ENCODE measurements at regions of chr2 and their contacts with region 1.

Region 1: DNA sequence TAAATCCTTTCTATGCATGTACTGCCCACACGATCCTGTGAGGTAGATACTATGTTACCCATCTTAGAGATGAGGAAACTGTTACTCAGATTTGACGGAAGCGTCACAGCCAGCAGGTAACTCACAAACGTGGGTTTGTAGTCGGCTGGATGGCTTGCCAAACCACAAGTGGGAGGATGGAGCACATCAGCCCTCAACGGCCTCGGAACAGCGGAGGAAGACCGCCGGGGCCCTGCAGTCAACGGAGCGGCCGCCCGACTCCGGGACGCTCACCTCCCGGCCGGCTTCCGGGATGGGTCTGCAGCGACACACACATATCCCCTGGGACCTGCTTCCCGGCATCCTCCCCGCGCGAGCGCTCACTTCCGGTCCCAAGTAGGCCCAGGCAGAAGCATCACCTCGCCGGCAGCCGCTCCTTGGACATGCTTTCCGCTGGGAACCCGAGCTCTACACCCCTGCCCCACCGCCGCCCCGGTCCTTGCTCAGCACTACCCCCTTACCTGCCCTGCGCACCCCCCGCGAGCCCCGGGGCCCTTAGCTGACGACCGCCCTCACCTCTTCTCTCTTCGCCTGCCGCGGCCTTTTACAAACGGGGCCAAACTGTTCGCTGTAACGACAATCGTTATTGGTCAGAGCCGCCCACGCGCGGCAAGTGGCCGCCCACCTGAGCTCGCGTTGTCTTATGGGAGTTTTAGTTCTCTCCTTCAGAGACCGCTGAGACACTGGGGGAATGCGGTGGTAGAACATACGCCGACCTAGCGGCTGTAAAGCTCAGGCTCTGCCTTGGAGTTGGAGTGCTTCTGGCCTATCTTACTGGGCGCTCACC is at the start of gene C2orf42:
- DNase-seq: peak; percentile 98
- H3K4me3 Mint-ChIP-seq: peak within 1 kb of the TSS; percentile 97
- H3K27ac Mint-ChIP-seq: peak within 1 kb of the TSS; percentile 99
- H3K4me1 Mint-ChIP-seq: peaks cover 20% of the 10 kb centered on the region
- H3K27me3 Mint-ChIP-seq: peaks cover 1% of the 10 kb centered on the region
- total RNA-seq, gene C2orf42: 23.5 to 23.9 TPM

Region 2: GRCh38 chr2:69829256-69830046 is 361.2 kb before region 1 on chr2 and contains the start of gene GMCL1:
- CTCF ChIA-PET with region 1: no interaction called
- POLR2A ChIA-PET with region 1: no interaction called
- intact Hi-C with region 1: loop called (anchors 1 kb)
- DNase-seq: peak; percentile 99
- H3K4me3 Mint-ChIP-seq: peak within 1 kb of the TSS; percentile 81
- H3K27ac Mint-ChIP-seq: peak within 1 kb of the TSS; percentile 92
- H3K4me1 Mint-ChIP-seq: peaks cover 40% of the 10 kb centered on the region
- H3K27me3 Mint-ChIP-seq: no peaks in the 10 kb centered on the region
- total RNA-seq, gene GMCL1: 20.6 to 22.1 TPM

Region 3: DNA sequence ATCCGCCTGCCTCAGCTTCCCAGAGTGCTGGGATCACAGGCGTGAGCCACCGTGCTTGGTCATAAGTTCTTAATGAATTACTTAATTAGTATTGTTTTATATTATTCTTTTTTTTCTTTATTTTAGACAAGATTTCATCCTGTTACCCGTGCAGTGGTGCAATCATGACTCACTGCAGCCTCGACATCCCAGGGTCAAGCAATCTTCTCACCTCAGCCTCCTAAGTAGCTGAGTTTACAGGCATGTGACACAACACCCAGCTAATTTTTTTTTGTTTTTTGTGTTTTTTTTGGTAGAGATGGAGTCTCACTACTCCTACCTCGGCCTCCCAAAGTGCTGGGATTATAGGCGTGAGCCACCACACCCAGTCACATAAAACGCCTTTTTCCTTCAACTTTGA is 17.1 kb before region 1 on chr2:
- CTCF ChIA-PET with region 1: no interaction called
- POLR2A ChIA-PET with region 1: no interaction called
- intact Hi-C with region 1: no loop called
- DNase-seq: no peak
- H3K4me3 Mint-ChIP-seq: no peak overlapping the region
- H3K27ac Mint-ChIP-seq: no peak overlapping the region
- H3K4me1 Mint-ChIP-seq: no peaks in the 10 kb centered on the region
- H3K27me3 Mint-ChIP-seq: no peaks in the 10 kb centered on the region

Region 4: DNA sequence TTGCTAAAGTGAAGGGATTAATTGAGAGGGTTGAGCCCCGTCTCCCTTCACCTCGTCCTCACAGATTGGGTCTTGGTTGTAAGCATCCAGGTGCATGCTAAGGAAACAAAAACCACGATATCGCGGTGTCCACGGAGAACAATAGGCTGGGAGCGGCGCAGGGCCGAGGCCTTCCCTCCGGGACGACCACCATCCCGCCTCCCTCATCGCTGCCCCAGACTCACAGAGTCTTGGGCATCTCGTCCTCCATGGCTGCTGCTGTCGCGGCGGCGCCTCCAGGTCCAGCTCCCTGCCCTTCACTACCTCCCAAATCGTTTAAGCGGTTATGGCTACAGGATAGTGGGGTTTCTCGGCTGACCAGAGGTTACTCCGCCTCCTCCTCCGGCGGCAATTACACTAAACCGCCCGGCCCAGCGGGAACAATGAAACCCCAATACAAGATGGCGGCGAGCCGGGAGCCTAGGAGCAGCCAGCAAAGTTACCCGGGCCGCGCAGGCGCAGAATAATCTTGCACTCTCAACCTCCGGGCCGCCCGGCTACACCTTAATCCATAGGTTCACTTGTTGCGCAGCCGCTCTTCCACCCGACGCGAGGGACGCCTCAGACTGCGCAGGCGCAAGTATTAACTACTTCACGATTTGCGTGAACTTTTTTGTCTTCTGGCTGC is 57.7 kb after region 1 on chr2 and contains the start of gene TIA1:
- CTCF ChIA-PET with region 1: no interaction called
- POLR2A ChIA-PET with region 1: interaction called, 12 read pairs
- intact Hi-C with region 1: loop called (anchors 1 kb)
- DNase-seq: peak; percentile 99
- H3K4me3 Mint-ChIP-seq: peak within 1 kb of the TSS; percentile 90
- H3K27ac Mint-ChIP-seq: peak within 1 kb of the TSS; percentile 96
- H3K4me1 Mint-ChIP-seq: peaks cover 28% of the 10 kb centered on the region
- H3K27me3 Mint-ChIP-seq: peaks cover 4% of the 10 kb centered on the region
- total RNA-seq, gene TIA1: 82.5 to 98.6 TPM

Region 5: GRCh38 chr2:70258532-70258874 is 67.9 kb after region 1 on chr2:
- CTCF ChIA-PET with region 1: no interaction called
- POLR2A ChIA-PET with region 1: interaction called, 10 read pairs
- intact Hi-C with region 1: loop called (anchors 2 kb)
- DNase-seq: peak; percentile 17
- H3K4me3 Mint-ChIP-seq: peak overlapping the region; percentile 86
- H3K27ac Mint-ChIP-seq: peak overlapping the region; percentile 13
- H3K4me1 Mint-ChIP-seq: peaks cover 28% of the 10 kb centered on the region
- H3K27me3 Mint-ChIP-seq: no peaks in the 10 kb centered on the region